ENCODE measurements at regions of chr1 and their contacts with region 1.

Region 1: DNA sequence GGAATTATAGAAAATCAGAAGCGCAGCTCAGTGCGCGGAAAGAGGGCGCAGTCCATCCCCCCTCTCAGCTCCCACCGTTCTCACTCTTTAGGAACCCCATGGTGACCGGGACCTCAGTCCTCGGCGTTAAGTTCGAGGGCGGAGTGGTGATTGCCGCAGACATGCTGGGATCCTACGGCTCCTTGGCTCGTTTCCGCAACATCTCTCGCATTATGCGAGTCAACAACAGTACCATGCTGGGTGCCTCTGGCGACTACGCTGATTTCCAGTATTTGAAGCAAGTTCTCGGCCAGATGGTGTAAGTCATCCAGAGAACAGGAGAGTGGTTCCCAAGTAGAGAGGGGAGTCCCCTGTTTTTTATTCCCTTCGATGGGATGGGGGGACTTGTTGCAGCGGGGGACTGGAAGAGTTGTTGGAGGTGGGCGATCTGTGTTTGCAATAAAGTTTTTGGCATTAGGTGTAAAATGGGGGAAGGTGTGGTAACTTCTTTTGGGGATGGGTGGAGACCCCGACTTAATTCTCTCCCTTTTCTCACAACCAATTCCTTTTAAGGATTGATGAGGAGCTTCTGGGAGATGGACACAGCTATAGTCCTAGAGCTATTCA is 620 bp downstream of the PSMB4 start:
- DNase-seq: peak in 1 of 2 donors; percentile 19
- H3K4me3 ChIP-seq: peak overlapping the region; percentile 92 to 96
- H3K27ac ChIP-seq: peak overlapping the region; percentile 91 to 92
- H3K4me1 ChIP-seq: peaks cover 0 to 9% of the 10 kb centered on the region in 2 donors
- H3K27me3 ChIP-seq: no peaks in the 10 kb centered on the region
- CTCF ChIP-seq: no peak
- POLR2A ChIP-seq: no peak

Region 2: DNA sequence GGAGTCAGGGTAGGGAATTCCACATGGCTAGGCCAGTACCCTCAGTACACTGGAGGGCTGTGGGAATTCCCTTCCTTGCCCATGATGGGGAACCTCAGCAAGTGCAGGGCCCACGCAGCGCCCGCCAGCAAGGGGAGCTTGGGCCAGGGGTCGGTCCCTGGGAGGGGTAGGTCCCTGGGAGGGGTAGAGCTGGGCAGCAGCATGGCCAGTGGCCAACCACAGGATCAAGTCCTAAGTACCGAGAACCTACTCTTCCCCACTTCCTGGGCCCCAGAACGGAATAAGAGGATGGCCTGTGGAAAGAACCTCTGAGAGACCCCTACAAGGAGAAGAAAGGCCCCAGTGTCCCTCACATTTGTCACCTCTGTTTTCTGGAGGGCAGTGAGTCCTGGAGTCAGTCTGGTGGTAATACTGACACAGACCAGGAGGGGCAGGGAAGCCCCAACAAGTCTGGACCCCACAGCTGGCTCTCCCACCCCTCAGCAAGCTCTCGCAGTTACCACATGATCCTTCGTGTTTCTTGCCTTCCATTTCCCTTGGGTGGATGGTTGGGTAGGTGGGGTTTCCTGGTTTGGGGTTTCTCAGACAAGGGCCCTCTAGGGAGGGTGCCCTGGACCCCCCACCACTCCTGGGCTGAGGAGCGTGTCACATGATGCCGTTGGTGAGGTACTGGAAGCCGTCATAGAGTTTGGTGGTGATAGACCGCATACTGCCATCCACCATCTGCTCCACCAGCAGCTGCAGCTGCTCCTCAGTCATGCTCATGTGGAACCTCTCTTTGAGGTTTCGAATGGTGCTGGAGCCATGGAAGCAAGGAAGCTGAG is 107.6 kb before region 1 on chr1:
- intact Hi-C with region 1: loop called (anchors 10 kb)
- DNase-seq: no peak
- H3K4me3 ChIP-seq: no peak overlapping the region
- H3K27ac ChIP-seq: no peak overlapping the region
- H3K4me1 ChIP-seq: no peaks in the 10 kb centered on the region
- H3K27me3 ChIP-seq: no peaks in the 10 kb centered on the region
- CTCF ChIP-seq: no peak
- POLR2A ChIP-seq: no peak

Region 3: DNA sequence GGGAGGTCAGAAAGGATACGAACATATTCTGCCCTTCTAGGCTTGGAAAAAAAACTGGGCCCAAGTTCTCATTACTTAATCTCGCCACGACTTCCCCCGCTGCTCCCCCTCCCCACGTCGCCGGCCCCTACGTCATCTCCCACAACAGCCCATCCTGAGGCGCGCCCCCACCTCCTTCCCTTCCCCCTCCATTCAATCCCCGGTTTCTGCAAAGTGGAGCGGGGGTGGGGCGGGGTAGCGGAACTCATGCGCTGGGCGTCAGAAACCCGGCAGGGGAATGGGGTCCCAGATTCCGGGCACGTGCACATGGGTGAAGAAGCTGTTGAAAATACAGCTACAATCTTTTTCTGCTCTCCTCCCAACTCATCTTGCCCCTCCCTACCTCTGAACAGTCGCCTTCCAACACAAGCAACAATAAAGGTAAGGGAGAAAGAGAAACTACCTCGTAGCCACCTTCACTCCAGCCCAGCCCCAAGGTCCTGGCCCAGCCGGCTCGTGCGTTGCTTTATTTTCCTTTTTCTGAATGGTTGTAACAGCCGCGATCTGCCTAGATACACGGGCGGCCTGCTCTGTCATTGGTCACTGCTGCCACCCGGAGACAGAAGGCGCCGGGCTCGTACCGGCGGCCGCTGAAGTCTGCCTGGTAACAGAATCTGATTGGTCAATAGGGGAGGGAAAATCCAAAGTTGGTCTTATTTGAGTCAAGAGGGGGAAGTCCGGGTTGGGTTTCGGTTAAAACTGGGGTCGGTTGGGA is 53.0 kb before region 1 on chr1 and contains the start of gene RFX5:
- intact Hi-C with region 1: loop called (anchors 10 kb)
- DNase-seq: peak; percentile 91 to 95
- H3K4me3 ChIP-seq: peak within 1 kb of the TSS; percentile 50 to 75
- H3K27ac ChIP-seq: peak within 1 kb of the TSS; percentile 87 to 89
- H3K4me1 ChIP-seq: peaks cover 0 to 8% of the 10 kb centered on the region in 2 donors
- H3K27me3 ChIP-seq: no peaks in the 10 kb centered on the region
- CTCF ChIP-seq: peak in 1 of 4 experiments; percentile 18
- POLR2A ChIP-seq: peak; percentile 55 to 63
- total RNA-seq, gene RFX5: 22.9 to 66.4 (median 34.1) TPM

Region 4: GRCh38 chr1:151510957-151511635 is 111.1 kb after region 1 on chr1 and contains the start of gene CGN:
- intact Hi-C with region 1: no loop called
- DNase-seq: peak; percentile 82 to 88
- H3K4me3 ChIP-seq: peak within 1 kb of the TSS; percentile 31 to 61
- H3K27ac ChIP-seq: peak within 1 kb of the TSS; percentile 70 to 82
- H3K4me1 ChIP-seq: peaks cover 0 to 11% of the 10 kb centered on the region in 2 donors
- H3K27me3 ChIP-seq: no peaks in the 10 kb centered on the region
- CTCF ChIP-seq: peak in 1 of 4 experiments; percentile 9
- POLR2A ChIP-seq: peak in 1 of 2 donors; percentile 14
- total RNA-seq, gene CGN: under 0.01 to 7.3 (median 0.85) TPM

Measured in uterus (tissue), 4 donors.